ENCODE measurements at regions of chr2 and their contacts with region 1.

Region 1: DNA sequence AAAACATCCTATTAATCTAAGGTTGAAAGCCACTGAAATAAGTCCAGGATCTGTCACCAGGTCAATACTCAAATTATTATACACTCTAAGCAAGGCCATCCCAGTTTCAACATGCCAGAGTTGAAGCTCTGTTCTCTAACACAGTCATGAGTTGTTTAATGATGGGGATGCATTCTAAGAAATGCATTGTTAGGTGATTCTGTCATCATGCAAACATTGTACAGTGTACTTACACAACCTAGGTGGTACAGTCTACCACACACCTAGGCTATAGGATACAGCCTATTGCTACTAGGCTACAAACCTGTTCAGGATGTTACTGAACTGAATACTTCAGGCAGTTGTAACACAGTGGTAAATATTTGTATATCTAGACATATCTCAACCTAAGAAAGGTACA is 162.2 kb downstream of the BAZ2B start:
- DNase-seq: no peak
- CTCF ChIP-seq: no peak

Region 2: GRCh38 chr2:159441182-159441581 is 13.0 kb before region 1 on chr2:
- CTCF ChIA-PET with region 1: interaction called, 12 read pairs
- POLR2A ChIA-PET with region 1: interaction called, 3 read pairs
- DNase-seq: no peak
- CTCF ChIP-seq: no peak

Measured in GM10248 (cell line).